ENCODE measurements at regions of chr20 and their contacts with region 1.

Region 1: GRCh38 chr20:51541189-51542032 is 1.1 kb downstream of the NFATC2 start:
- DNase-seq: peak; percentile 80
- ATAC-seq: peak; percentile 81
- H3K4me3 Mint-ChIP-seq: peak overlapping the region; percentile 99
- H3K27ac Mint-ChIP-seq: peak overlapping the region; percentile 97
- H3K4me1 Mint-ChIP-seq: peaks cover 43% of the 10 kb centered on the region
- H3K27me3 Mint-ChIP-seq: peaks cover 13% of the 10 kb centered on the region

Region 2: GRCh38 chr20:51385646-51386530 is 155.5 kb before region 1 on chr20:
- POLR2A ChIA-PET with region 1: interaction called, 19 read pairs
- DNase-seq: peak; percentile 40
- ATAC-seq: peak; percentile 44
- H3K4me3 Mint-ChIP-seq: no peak overlapping the region
- H3K27ac Mint-ChIP-seq: peak overlapping the region; percentile 76
- H3K4me1 Mint-ChIP-seq: peaks cover 49% of the 10 kb centered on the region
- H3K27me3 Mint-ChIP-seq: no peaks in the 10 kb centered on the region

Region 3: GRCh38 chr20:51400051-51400926 is 141.1 kb before region 1 on chr20:
- POLR2A ChIA-PET with region 1: interaction called, 20 read pairs
- DNase-seq: peak; percentile 72
- ATAC-seq: peak; percentile 82
- H3K4me3 Mint-ChIP-seq: peak overlapping the region; percentile 75
- H3K27ac Mint-ChIP-seq: peak overlapping the region; percentile 96
- H3K4me1 Mint-ChIP-seq: peaks cover 69% of the 10 kb centered on the region
- H3K27me3 Mint-ChIP-seq: no peaks in the 10 kb centered on the region

Region 4: GRCh38 chr20:51494241-51495120 is 46.9 kb before region 1 on chr20:
- POLR2A ChIA-PET with region 1: interaction called, 31 read pairs
- DNase-seq: no peak
- ATAC-seq: peak; percentile 29
- H3K4me3 Mint-ChIP-seq: peak overlapping the region; percentile 77
- H3K27ac Mint-ChIP-seq: peak overlapping the region; percentile 92
- H3K4me1 Mint-ChIP-seq: peaks cover 82% of the 10 kb centered on the region
- H3K27me3 Mint-ChIP-seq: no peaks in the 10 kb centered on the region

Region 5: GRCh38 chr20:51500311-51500710 is 41.1 kb before region 1 on chr20:
- POLR2A ChIA-PET with region 1: interaction called, 31 read pairs
- DNase-seq: no peak
- ATAC-seq: peak; percentile 94
- H3K4me3 Mint-ChIP-seq: peak overlapping the region; percentile 23
- H3K27ac Mint-ChIP-seq: peak overlapping the region; percentile 77
- H3K4me1 Mint-ChIP-seq: peaks cover 82% of the 10 kb centered on the region
- H3K27me3 Mint-ChIP-seq: no peaks in the 10 kb centered on the region

Region 6: DNA sequence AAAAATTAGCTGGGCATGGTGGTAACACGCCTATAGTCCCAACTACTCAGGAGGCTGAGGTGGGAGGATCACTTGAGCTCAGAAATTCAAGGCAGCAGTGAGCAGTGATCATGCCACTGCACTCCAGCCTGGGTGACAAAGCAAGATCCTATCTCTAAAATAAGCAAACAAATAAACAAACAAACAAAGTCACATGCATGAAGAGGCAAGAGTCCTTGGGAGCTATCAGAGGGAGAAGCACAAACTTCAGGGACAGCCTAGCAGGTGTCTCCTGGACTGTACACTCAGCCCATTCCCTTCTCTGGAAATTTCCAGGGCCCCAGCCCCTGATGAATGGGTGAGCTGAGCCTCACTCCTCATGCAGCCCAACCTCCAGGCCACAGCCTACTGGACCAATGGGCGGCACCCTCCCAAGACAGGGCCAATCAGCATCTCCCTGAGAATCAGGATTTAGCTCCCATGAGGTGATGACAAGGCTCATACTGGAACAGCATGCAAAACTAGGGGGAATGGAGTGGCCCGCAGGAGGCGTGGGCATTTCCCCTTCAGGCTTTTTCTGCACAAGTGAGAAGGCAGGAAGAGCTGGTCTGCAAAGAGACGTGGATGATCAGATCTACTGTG is 28.0 kb before region 1 on chr20:
- POLR2A ChIA-PET with region 1: interaction called, 14 read pairs
- DNase-seq: no peak
- ATAC-seq: no peak
- H3K4me3 Mint-ChIP-seq: peak overlapping the region; percentile 31
- H3K27ac Mint-ChIP-seq: peak overlapping the region; percentile 68
- H3K4me1 Mint-ChIP-seq: peaks cover 62% of the 10 kb centered on the region
- H3K27me3 Mint-ChIP-seq: no peaks in the 10 kb centered on the region

Region 7: GRCh38 chr20:51525241-51526129 is 15.9 kb before region 1 on chr20:
- POLR2A ChIA-PET with region 1: interaction called, 34 read pairs
- DNase-seq: no peak
- ATAC-seq: peak; percentile 49
- H3K4me3 Mint-ChIP-seq: peak overlapping the region; percentile 79
- H3K27ac Mint-ChIP-seq: peak overlapping the region; percentile 90
- H3K4me1 Mint-ChIP-seq: peaks cover 57% of the 10 kb centered on the region
- H3K27me3 Mint-ChIP-seq: no peaks in the 10 kb centered on the region

Region 8: GRCh38 chr20:51586005-51586440 is 44.6 kb after region 1 on chr20:
- POLR2A ChIA-PET with region 1: no interaction called
- DNase-seq: no peak
- ATAC-seq: no peak
- H3K4me3 Mint-ChIP-seq: no peak overlapping the region
- H3K27ac Mint-ChIP-seq: no peak overlapping the region
- H3K4me1 Mint-ChIP-seq: peaks cover 7% of the 10 kb centered on the region
- H3K27me3 Mint-ChIP-seq: peaks cover 3% of the 10 kb centered on the region